Activated CD4-positive, alpha-beta T cell treated with anti-CD3 and anti-CD28 coated beads, Interleukin-2, amount 10 ng/mL, durations not matched to agents 24 days and 14 days (primary cell): ENCODE measurements at regions of chr14 and their contacts with region 1.

Region 1: GRCh38 chr14:28773861-28774691 is 7.5 kb downstream of the FOXG1 start:
- DNase-seq: no peak
- H3K4me3 Mint-ChIP-seq: no peak overlapping the region
- H3K27ac Mint-ChIP-seq: no peak overlapping the region
- H3K4me1 Mint-ChIP-seq: no peaks in the 10 kb centered on the region
- H3K27me3 Mint-ChIP-seq: peaks cover 50% of the 10 kb centered on the region

Region 2: DNA sequence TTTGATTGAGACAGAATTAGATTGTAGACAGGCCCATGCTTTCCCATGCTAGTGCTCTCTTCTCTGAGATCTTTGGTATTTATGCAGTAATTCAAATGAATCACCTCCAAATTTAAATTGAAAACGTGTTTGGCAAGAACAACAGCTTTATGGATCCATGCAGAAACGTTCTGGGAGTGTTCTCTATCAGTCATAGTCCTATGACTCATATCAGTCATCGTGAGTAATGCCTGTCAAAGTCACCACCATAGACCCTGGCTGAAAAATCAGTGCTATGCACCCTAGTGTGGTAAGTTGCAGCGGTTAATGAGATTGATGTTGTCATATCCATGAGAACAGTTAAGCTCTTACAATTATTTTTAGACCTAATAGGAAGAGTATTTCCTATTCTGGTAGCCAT is 97.6 kb before region 1 on chr14:
- intact Hi-C with region 1: no loop called
- DNase-seq: no peak
- H3K4me3 Mint-ChIP-seq: no peak overlapping the region
- H3K27ac Mint-ChIP-seq: no peak overlapping the region
- H3K4me1 Mint-ChIP-seq: no peaks in the 10 kb centered on the region
- H3K27me3 Mint-ChIP-seq: no peaks in the 10 kb centered on the region

Region 3: DNA sequence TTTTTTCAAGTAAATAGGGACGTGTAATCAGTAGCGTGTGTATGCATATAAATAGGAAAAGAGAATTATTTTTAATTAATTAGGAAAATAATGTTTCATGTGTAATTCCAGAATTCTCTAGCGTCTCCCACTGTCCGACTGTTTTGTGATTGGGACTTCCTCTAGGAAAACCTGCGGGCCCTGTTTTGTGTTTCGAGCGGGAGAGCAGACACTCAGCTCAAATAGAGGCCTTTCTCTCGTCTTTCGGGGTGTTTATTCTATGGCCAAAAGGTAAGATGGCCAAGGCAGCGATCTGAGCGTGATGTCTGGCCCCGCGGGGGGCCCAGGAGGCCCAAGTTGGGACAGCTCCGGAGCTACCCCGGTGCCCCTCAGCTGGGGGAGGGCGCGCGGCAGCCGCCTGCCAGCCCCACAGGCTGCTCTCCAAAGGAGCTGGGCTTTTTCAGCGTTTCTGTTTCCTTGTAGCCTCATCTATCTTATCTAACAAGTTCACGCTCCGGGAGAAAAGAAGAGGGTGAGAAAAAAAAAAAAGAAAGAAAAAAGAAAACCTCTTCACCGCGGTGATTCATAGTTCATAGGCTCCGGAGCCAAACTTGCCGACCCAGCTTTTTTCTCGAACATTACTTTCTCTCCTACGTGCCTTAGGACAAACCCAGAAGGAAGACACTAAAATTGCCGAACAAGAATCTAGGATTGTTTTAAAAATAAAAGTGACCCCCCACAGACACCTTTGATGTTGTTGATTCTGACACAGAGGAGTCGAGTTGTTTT is 15.0 kb before region 1 on chr14:
- intact Hi-C with region 1: loop called (anchors 2 kb)
- DNase-seq: no peak
- H3K4me3 Mint-ChIP-seq: no peak overlapping the region
- H3K27ac Mint-ChIP-seq: peak overlapping the region; percentile 56
- H3K4me1 Mint-ChIP-seq: no peaks in the 10 kb centered on the region
- H3K27me3 Mint-ChIP-seq: peaks cover 70% of the 10 kb centered on the region

Region 4: DNA sequence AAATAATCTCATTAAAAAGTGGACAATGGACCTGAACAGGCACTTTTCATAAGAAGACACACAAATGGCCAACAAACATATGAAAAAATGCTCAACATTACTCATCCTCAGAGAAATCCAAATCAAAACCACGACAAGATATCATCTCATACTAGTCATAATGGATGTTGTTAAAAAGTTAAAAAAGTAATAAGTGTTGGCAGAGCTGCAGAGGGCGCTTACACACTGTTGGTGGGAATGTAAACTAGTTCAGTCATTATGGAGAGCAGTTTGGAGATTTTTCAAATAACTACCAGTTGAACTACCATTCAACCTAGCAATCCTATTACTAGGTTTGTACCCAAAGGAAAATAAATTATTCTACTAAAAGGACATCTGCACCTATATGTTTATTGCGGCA is 39.7 kb after region 1 on chr14:
- intact Hi-C with region 1: no loop called
- DNase-seq: no peak
- H3K4me3 Mint-ChIP-seq: no peak overlapping the region
- H3K27ac Mint-ChIP-seq: no peak overlapping the region
- H3K4me1 Mint-ChIP-seq: no peaks in the 10 kb centered on the region
- H3K27me3 Mint-ChIP-seq: no peaks in the 10 kb centered on the region

Region 5: DNA sequence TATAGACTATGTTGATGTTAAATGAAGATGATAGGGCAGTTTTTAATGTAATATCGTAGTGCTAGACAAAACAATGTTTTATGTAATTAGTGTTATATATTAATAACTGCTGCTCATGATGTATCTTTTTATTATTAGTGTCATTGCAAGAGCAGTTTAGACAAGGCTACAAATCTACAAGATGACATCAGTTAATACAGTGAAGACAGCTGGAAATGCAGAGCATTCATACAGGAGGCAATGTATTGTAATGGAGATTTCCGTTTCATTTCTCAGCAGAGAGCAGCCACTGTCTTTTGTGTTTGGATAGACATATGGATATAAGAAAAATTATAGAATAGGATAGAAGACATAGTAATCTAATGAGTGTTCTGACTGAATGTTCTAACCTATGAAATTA is 170.5 kb after region 1 on chr14:
- intact Hi-C with region 1: no loop called
- DNase-seq: no peak
- H3K4me3 Mint-ChIP-seq: no peak overlapping the region
- H3K27ac Mint-ChIP-seq: no peak overlapping the region
- H3K4me1 Mint-ChIP-seq: no peaks in the 10 kb centered on the region
- H3K27me3 Mint-ChIP-seq: no peaks in the 10 kb centered on the region

Region 6: GRCh38 chr14:29054119-29054518 is 280.0 kb after region 1 on chr14:
- intact Hi-C with region 1: no loop called
- DNase-seq: no peak
- H3K4me3 Mint-ChIP-seq: no peak overlapping the region
- H3K27ac Mint-ChIP-seq: no peak overlapping the region
- H3K4me1 Mint-ChIP-seq: no peaks in the 10 kb centered on the region
- H3K27me3 Mint-ChIP-seq: no peaks in the 10 kb centered on the region